Calu3 (cell line): ENCODE measurements at regions of chr2 and their contacts with region 1.

Region 1: DNA sequence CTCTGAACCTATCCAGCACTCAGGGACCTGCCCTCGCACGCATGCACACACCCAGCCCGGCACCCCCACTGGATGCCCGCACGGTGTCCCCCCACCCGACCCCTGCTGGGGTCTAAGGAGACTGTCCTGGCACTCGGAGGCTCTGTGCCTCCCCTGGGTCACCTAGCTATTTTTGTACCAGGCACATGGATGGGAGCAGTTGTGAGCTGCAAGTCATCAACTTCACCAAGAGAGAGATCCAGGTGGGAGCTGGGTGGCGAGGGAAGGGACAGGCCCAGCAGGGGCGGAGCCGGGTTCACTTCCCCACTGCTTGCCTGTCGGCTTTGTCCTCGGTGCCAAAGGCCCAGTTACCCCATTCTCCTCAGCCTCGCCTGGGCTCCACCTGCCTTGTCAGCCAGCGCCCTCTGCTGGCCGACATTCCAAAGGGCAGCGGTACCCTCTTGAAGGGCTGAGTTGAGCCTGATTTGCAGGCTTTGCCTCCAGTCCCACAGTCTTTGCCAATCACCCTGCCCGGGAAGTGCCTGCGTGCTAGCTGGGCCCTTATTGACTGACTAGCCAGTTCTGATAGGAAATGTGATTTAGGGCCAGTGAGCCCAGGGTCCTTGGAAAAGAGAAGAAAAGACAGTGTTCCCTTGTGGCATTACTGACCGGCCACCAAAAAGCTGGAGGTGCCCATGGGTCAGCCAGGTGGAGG is 5.8 kb downstream of the NT5DC4 start:
- DNase-seq: peak; percentile 96
- H3K4me3 Mint-ChIP-seq: peak overlapping the region; percentile 67
- H3K27ac Mint-ChIP-seq: peak overlapping the region; percentile 92
- H3K4me1 Mint-ChIP-seq: peaks cover 38% of the 10 kb centered on the region
- H3K27me3 Mint-ChIP-seq: no peaks in the 10 kb centered on the region
- CTCF ChIP-seq: peak; percentile 92

Region 2: DNA sequence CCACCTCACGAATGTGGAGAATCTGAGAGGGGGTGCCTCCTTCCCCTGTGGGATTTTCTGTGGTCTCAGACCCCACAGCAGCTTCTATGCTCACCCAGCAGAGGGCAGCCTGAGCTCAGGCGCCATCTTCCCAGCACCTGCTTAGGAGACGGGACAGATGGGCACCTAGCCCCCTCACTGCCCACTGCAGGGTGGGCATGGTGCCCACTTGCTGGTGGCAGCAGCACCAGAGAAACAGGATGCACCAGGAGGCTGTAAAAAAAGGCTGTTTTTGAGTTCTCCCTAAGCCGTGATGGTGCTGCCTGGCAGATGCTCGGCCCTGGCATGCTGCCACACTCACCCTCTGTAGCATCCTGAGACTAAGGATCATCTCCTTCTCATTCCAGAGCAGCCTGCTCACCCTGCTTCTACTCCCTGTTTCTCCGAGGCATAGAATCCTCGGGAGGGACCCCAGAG is 100.0 kb before region 1 on chr2:
- CTCF ChIA-PET with region 1: interaction called, 92 read pairs
- intact Hi-C with region 1: loop called (anchors 1 kb)
- DNase-seq: peak; percentile 74
- H3K4me3 Mint-ChIP-seq: peak overlapping the region; percentile 43
- H3K27ac Mint-ChIP-seq: peak overlapping the region; percentile 85
- H3K4me1 Mint-ChIP-seq: peaks cover 61% of the 10 kb centered on the region
- H3K27me3 Mint-ChIP-seq: no peaks in the 10 kb centered on the region
- CTCF ChIP-seq: peak; percentile 89

Region 3: GRCh38 chr2:112685271-112685884 is 41.3 kb before region 1 on chr2:
- CTCF ChIA-PET with region 1: interaction called, 10 read pairs
- intact Hi-C with region 1: no loop called
- DNase-seq: no peak
- H3K4me3 Mint-ChIP-seq: no peak overlapping the region
- H3K27ac Mint-ChIP-seq: no peak overlapping the region
- H3K4me1 Mint-ChIP-seq: peaks cover 14% of the 10 kb centered on the region
- H3K27me3 Mint-ChIP-seq: no peaks in the 10 kb centered on the region
- CTCF ChIP-seq: no peak

Region 4: DNA sequence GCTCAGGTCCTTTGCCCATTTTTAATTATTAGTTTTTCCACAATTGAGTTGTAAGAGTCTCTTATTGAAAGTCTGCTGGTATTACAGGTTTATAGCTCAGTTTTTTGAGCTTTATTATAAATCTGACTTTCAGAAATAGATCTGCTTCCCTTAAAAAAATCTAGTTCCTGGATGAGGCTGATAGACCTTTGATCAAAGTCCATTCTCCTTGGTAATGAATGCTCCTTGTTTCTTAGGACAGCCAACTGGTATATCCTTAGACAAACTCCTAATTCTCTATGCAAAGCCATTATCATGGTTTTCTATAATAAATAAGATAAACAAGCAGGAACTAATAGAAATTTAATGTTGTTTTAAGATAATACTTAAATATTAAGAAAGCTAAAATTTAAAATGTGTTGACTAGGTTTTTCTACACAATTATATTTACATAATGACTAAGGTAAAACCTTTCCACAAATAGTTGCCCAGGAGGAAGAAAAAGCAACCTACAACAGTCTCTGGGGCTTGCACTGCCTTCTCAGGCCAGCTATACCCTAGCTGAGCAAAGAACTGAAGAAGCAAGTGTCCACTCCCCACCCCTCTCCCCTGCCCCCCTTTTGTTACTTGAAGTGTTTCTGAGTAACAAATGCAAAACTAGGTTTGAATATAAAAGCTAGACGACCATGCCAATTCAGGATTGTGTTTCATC is 11.0 kb after region 1 on chr2:
- CTCF ChIA-PET with region 1: interaction called, 15 read pairs
- intact Hi-C with region 1: no loop called
- DNase-seq: no peak
- H3K4me3 Mint-ChIP-seq: no peak overlapping the region
- H3K27ac Mint-ChIP-seq: peak overlapping the region; percentile 50
- H3K4me1 Mint-ChIP-seq: peaks cover 22% of the 10 kb centered on the region
- H3K27me3 Mint-ChIP-seq: no peaks in the 10 kb centered on the region
- CTCF ChIP-seq: no peak

Region 5: GRCh38 chr2:113012436-113013335 is 286.0 kb after region 1 on chr2:
- CTCF ChIA-PET with region 1: no interaction called
- intact Hi-C with region 1: no loop called
- DNase-seq: peak; percentile 14
- H3K4me3 Mint-ChIP-seq: no peak overlapping the region
- H3K27ac Mint-ChIP-seq: peak overlapping the region; percentile 78
- H3K4me1 Mint-ChIP-seq: peaks cover 6% of the 10 kb centered on the region
- H3K27me3 Mint-ChIP-seq: peaks cover under 1% of the 10 kb centered on the region
- CTCF ChIP-seq: no peak